Cardiac septum (tissue), 1 donor: ENCODE measurements at regions of chr3 and their contacts with region 1.

Region 1: GRCh38 chr3:167684388-167684993 is 30.7 kb upstream of the WDR49 start:
- DNase-seq: no peak

Region 2: DNA sequence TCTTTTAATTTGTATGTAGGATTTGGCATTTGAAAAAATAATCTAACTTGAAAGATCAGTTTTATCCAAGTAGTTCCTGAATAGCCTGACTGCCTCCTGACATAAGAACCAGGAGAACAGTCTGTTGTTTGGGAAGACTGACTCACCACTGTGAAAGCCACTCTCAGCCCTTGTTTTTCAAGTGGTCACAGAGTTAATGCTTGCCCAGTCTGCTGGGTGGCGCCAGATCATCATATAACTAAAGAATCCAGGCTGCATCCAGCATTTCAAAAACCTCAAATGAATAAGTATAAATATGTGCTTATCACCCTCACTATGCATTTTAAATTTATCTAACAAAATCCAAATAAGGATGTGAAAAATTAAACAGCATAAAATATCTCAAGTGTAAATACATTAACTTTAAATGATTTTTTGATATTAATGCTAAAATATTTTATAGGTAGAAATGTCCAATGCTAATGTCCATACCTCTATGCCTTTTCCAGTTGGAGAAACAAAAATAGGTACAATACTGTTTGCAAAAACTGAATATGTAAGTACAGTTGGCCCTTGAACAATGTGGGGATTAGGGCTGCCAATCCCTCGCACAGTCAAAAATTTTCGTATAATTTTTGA is 277.5 kb before region 1 on chr3:
- intact Hi-C with region 1: loop called (anchors 10 kb)
- DNase-seq: no peak

Region 3: DNA sequence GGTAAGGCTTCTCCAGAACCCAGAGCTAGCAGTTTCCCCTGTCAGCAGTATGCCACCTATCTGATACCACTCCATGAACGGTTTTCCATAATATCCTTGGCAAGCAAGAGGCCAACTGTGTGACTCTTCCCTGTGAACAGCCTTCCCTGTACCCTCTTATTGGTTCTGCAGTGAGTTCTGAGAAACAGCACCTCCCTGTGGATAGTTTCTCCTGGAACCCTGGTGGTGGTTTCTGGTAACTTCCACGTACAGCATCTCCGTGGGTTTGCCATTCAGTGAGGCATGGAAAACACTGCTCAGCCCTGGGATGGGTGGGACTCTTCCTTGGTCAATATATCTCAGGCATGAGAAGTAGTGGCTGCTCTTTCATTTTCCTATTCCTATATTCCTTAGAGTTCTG is 191.2 kb before region 1 on chr3:
- intact Hi-C with region 1: no loop called
- DNase-seq: no peak